Activated T-helper 2 cell treated with anti-CD3 and anti-CD28 coated beads, Interferon-gamma antibody, Interleukin-2, Interleukin-4, amounts not matched to agents 10 μg/mL and 5 μg/mL and 100 μg/mL, durations not matched to agents 14 hours and 24 hours and 36 hours (primary cell): ENCODE measurements at regions of chr1 and their contacts with region 1.

Region 1: DNA sequence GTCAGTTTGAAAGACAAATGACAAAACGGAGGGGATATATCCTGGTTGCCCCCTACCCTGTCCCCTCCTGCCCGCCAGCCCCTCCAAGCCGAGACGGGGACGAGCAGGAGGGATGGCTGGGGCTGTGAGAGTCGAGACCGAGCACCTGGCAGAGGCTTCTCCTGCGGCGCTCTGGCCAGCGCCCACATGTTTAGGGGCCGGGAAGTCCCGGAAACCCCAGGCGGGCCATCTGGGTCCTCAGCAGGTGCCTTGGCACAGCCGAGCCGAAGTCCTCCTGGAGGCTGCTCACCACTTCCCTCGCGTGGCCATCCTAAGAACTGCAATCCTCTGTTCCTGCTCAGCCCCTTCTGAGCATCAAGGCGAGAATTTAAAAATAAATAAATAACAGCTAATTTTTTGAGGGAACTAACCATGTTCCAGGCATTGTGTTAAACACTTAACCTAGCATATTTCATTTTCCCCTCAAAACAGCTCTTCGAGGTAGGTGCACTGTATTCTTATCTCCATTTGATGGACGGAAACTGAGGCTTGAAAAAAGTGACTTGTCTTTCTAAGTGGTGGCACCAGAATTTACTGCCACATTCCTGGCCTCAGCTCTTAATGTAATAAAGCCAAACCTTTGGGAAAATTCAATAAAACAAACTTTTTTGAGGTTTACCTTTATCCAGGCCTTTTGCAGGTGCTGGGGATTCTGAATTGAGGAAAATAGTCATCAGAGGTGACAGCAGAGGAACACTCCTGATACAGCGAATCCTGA is 3.5 kb upstream of the RIMS3 start:
- DNase-seq: peak; percentile 74
- H3K4me3 Mint-ChIP-seq: no peak overlapping the region
- H3K27ac Mint-ChIP-seq: no peak overlapping the region
- H3K4me1 Mint-ChIP-seq: peaks cover 11% of the 10 kb centered on the region
- H3K27me3 Mint-ChIP-seq: peaks cover 4% of the 10 kb centered on the region

Region 2: DNA sequence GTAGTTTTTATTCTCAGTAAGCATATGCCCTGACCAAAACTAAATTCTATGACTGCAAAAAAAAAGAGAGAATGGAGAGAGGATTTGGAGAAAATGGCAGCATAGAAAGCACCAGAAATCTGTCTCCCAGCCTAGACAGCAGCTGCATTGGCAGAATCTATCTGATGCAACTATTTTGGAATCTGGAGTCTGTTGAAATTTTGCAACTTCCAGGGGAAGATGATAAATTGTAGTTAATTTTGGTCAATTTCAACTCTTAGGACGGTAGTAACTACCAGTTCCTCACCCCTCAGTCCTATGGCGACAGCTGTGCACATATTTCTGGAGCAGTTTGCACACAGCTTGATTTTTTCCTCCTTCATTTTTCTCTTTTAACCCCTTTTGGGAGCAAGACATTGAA is 149.4 kb before region 1 on chr1:
- intact Hi-C with region 1: no loop called
- DNase-seq: no peak
- H3K4me3 Mint-ChIP-seq: no peak overlapping the region
- H3K27ac Mint-ChIP-seq: no peak overlapping the region
- H3K4me1 Mint-ChIP-seq: no peaks in the 10 kb centered on the region
- H3K27me3 Mint-ChIP-seq: no peaks in the 10 kb centered on the region

Region 3: DNA sequence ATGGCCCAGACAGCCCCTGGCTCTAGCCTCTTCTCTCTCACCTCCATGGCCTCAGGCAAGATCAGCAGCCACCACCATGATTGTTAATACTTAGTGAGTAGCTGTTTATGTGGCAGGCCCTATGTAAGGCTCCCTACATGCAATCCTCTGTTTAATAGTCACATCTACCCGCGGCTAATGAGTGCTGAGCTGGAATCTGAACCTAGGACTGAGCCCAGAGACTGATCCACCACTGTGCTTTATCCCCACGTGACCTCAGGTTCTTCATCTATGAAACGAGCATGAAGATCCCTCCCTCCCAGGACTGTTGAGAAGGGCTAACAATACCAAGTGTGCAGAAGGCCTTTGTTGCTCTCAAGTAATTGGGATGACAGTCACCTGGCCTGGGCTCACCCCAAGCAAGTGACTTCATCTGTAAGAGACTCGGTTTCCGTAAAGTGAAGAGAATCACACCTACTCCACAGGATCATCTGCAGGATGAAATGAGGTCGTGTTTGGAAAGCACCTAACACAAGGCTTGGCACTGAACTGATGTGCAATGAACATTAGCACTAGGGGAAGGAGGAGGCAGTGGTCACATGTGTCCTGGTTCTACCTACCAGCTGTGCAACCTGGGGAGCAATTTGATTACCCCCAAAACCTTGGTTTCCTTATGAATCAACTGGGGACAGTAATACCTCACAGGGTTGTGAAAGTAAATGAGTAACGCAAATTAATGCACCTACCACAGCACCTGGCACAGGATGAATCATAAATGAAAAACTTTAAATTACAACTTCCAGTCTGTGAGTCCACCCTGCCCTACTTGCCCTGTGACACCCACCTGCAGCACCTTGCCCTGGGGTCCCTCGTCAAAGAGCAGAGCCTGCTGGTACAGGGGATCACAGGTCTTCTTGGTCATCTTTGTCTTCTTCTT is 40.7 kb before region 1 on chr1:
- intact Hi-C with region 1: loop called (anchors 2 kb)
- DNase-seq: no peak
- H3K4me3 Mint-ChIP-seq: no peak overlapping the region
- H3K27ac Mint-ChIP-seq: no peak overlapping the region
- H3K4me1 Mint-ChIP-seq: peaks cover 11% of the 10 kb centered on the region
- H3K27me3 Mint-ChIP-seq: no peaks in the 10 kb centered on the region

Region 4: DNA sequence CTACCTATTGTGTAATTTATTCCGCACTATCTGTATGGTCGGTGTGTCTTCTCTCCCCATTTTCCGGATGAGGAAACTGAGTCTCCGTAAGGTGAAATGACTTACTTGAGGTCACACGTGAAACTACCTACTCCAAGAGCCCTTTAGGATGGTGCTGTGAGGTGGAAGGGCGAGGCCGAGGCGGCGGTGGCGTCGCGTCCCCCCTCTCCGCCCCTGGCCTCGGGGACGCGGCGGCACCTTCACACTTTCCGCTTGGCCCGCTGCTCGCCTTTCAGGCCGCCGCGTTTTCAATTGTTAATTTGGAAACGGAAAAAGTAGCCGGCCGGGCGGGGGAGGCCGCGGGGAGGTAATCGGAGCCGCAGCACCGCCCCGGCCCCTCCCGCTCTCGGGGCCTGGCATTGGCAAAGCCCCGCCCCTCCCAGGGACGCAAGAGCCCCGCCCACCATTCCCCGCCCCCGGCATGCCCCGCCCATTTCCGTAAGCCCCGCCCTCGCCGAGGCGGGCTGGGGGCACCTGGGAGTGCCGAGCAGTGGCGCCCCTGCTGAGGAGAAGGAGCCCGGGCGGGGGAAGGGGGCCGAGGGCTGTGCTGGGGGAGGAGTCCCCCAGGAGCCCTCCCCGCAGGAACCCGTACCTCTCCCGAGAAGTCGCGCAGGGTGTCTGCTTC is 133.3 kb after region 1 on chr1:
- intact Hi-C with region 1: loop called (anchors 5 kb)
- DNase-seq: peak; percentile 79
- H3K4me3 Mint-ChIP-seq: peak overlapping the region; percentile 15
- H3K27ac Mint-ChIP-seq: peak overlapping the region; percentile 35
- H3K4me1 Mint-ChIP-seq: peaks cover 24% of the 10 kb centered on the region
- H3K27me3 Mint-ChIP-seq: no peaks in the 10 kb centered on the region